Transverse colon (tissue), 4 donors: ENCODE measurements at regions of chr17 and their contacts with region 1.

Region 1: DNA sequence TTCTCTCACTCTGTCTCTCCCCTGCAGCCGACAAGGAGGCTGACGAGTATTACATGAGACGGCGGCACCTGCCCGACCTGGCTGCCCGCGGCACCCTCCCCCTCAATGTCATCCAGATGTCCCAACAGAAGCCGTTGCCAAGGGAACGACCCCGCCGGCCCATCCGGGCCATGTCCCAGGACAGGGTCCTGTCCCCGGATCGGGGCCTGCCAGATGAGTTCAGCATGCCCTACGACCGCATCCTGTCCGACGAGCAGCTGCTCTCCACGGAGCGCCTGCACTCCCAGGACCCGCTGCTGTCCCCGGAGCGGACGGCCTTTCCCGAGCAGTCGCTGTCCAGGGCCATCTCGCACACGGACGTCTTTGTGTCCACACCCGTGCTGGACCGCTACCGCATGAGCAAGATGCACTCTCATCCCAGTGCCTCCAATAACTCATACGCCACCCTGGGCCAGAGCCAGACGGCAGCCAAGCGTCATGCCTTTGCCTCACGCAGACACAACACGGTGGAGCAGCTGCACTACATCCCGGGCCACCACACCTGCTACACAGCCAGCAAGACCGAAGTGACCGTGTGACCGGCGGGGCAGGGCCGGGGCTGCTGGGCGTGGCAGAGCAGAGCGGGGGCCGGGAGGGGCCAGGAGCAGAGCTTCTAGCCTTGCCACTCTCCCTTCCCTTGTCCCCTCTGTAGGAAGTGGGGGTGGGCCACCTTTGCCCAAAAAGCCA is 40.4 kb upstream of the DNAH9 start:
- DNase-seq: no peak
- H3K4me3 ChIP-seq: no peak overlapping the region
- H3K27ac ChIP-seq: no peak overlapping the region
- H3K4me1 ChIP-seq: no peaks in the 10 kb centered on the region
- H3K27me3 ChIP-seq: no peaks in the 10 kb centered on the region
- CTCF ChIP-seq: no peak
- EP300 ChIP-seq: no peak
- POLR2A ChIP-seq: no peak

Region 2: DNA sequence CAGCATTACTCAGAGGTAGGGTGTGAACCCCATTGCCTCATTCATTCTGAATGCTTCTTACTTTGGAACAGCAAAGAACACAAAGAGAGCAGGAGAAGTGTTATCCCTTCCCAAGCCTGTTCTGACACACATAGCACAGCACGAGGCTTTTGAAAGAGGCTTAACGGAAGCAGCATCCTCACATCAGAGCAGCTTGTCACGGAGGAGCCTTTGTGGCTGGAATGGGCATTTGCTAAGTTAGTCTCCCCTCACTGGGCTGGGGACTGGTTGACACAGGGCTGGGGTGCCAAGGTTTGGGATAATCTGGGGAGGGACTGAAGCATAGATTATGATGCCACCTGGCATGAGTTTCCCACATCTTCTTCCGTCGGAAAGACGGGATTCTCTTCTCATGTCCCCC is 127.1 kb before region 1 on chr17:
- in situ Hi-C with region 1: no loop called
- intact Hi-C with region 1: no loop called
- DNase-seq: no peak
- H3K4me3 ChIP-seq: no peak overlapping the region
- H3K27ac ChIP-seq: no peak overlapping the region
- H3K4me1 ChIP-seq: no peaks in the 10 kb centered on the region
- H3K27me3 ChIP-seq: no peaks in the 10 kb centered on the region
- CTCF ChIP-seq: no peak
- EP300 ChIP-seq: no peak
- POLR2A ChIP-seq: no peak

Region 3: DNA sequence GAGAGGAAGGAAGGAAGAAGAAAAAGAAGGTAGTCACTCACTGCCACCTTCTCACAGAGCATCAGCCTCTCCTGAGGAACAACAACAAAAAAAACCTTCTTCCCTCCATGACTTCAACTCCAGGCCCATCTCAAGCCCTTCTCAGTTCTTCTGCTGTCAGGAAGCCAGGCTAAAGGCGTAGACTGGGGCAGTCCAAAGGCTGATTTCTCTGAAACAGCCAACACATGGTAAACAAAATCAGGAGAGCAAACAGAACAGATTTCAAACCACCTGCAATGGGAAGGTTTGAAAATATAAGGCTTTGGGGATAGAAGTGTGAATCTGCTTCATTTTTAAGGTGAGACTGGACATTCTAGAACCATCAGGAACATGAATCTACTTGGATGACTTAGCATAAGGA is 116.9 kb before region 1 on chr17:
- in situ Hi-C with region 1: no loop called
- intact Hi-C with region 1: no loop called
- DNase-seq: no peak
- H3K4me3 ChIP-seq: no peak overlapping the region
- H3K27ac ChIP-seq: no peak overlapping the region
- H3K4me1 ChIP-seq: no peaks in the 10 kb centered on the region
- H3K27me3 ChIP-seq: no peaks in the 10 kb centered on the region
- CTCF ChIP-seq: no peak
- EP300 ChIP-seq: no peak
- POLR2A ChIP-seq: no peak

Region 4: GRCh38 chr17:11618861-11619566 is 61.1 kb after region 1 on chr17:
- in situ Hi-C with region 1: loop called in 1 of 4 experiments (anchors 10 kb)
- intact Hi-C with region 1: no loop called
- DNase-seq: peak; percentile 86
- H3K4me3 ChIP-seq: peak overlapping the region in 1 of 4 donors; percentile 18
- H3K27ac ChIP-seq: peak overlapping the region; percentile 62 to 76 (median 65)
- H3K4me1 ChIP-seq: peaks cover 0 to 10% (median 3%) of the 10 kb centered on the region in 4 donors
- H3K27me3 ChIP-seq: no peaks in the 10 kb centered on the region
- CTCF ChIP-seq: no peak
- EP300 ChIP-seq: no peak
- POLR2A ChIP-seq: no peak

Region 5: DNA sequence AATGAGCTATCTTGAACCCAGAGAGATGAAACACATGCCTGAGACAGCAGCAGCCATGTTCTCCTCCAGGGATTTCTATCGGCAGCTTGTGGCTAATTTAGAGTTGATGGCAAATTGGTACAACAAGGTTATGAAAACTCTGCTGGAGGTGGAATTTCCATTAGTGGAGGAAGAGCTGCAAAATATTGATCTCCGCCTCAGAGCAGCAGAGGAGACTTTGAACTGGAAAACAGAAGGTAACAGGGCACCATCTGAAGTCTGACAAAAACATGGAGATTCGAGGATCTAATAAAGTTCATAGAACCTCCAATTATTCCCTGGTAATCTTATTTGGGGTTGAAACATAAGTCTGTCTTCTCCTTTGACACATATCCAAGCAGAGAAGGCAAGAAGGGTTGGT is 93.2 kb after region 1 on chr17:
- in situ Hi-C with region 1: no loop called
- intact Hi-C with region 1: no loop called
- DNase-seq: no peak
- H3K4me3 ChIP-seq: no peak overlapping the region
- H3K27ac ChIP-seq: no peak overlapping the region
- H3K4me1 ChIP-seq: no peaks in the 10 kb centered on the region
- H3K27me3 ChIP-seq: no peaks in the 10 kb centered on the region
- CTCF ChIP-seq: no peak
- EP300 ChIP-seq: no peak
- POLR2A ChIP-seq: no peak